Heart left ventricle (tissue), 16 donors: ENCODE measurements at regions of chr3 and their contacts with region 1.

Region 1: DNA sequence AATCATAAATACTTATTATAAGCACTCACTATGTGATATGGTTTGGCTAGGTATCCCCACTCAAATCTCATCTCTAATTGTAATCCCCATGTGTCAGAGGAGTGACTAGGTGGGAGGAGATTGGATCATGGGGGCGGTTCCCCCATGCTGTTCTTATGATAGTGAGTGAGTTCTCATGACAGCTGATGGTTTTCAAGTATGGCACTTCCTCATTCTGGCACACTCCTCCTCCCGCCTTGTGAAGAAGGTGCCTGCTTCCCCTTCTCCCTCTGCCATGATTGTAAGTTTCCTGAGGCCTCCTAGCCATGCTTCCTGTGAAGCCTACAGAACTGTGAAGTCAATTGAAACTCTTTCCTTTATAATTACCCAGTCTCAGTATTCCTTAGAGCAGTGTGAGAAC is 53.3 kb upstream of the CHMP2B start:
- DNase-seq: no peak
- ATAC-seq: no peak
- H3K4me3 ChIP-seq: no peak overlapping the region
- H3K27ac ChIP-seq: no peak overlapping the region
- H3K4me1 ChIP-seq: no peaks in the 10 kb centered on the region
- H3K27me3 ChIP-seq: no peaks in the 10 kb centered on the region
- CTCF ChIP-seq: no peak
- POLR2A ChIP-seq: no peak

Region 2: DNA sequence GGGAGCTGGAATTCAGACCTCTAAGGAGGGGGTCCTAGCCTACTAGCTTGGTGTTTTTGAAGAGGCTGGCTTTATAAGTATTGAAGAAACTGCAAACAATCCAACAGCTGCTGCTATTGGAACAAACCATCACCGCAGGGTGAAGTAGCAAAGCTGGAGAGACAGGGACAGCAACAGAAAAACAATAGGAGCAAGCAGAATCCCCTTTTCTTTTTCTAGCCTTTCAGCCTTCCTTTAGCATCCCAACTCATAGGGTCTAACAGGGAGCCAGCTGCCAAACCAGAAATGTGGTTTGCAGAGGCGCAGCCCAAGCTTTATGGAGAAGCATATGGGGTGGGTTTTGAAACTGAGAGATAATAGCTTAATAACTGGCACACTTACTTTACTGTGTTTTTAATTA is 52.9 kb before region 1 on chr3:
- intact Hi-C with region 1: loop called in 1 of 10 experiments (anchors 10 kb)
- DNase-seq: no peak
- ATAC-seq: no peak
- H3K4me3 ChIP-seq: no peak overlapping the region
- H3K27ac ChIP-seq: no peak overlapping the region
- H3K4me1 ChIP-seq: no peaks in the 10 kb centered on the region
- H3K27me3 ChIP-seq: no peaks in the 10 kb centered on the region
- CTCF ChIP-seq: no peak
- POLR2A ChIP-seq: no peak

Region 3: GRCh38 chr3:87227104-87227834 is 53.5 kb after region 1 on chr3 and contains the start of gene CHMP2B:
- intact Hi-C with region 1: no loop called
- DNase-seq: peak; percentile 91 to 96 (median 95)
- ATAC-seq: peak; percentile 98 to 99 (median 98)
- H3K4me3 ChIP-seq: peak within 1 kb of the TSS; percentile 65 to 98 (median 92)
- H3K27ac ChIP-seq: peak within 1 kb of the TSS; percentile 67 to 97 (median 92)
- H3K4me1 ChIP-seq: peaks cover 0 to 37% (median 18%) of the 10 kb centered on the region in 12 donors
- H3K27me3 ChIP-seq: no peaks in the 10 kb centered on the region
- CTCF ChIP-seq: no peak
- POLR2A ChIP-seq: peak in 1 of 2 donors; percentile 82
- total RNA-seq, gene CHMP2B: 25.3 to 42.3 (median 32.0) TPM